ENCODE measurements at regions of chr20 and their contacts with region 1.

Region 1: GRCh38 chr20:41064377-41064776 is 35.8 kb downstream of the TOP1 start:
- DNase-seq: no peak
- ATAC-seq: peak; percentile 62
- H3K4me3 Mint-ChIP-seq: peak overlapping the region; percentile 33
- H3K27ac Mint-ChIP-seq: no peak overlapping the region
- H3K4me1 Mint-ChIP-seq: peaks cover 52% of the 10 kb centered on the region
- H3K27me3 Mint-ChIP-seq: no peaks in the 10 kb centered on the region
- CTCF ChIP-seq: no peak

Region 2: DNA sequence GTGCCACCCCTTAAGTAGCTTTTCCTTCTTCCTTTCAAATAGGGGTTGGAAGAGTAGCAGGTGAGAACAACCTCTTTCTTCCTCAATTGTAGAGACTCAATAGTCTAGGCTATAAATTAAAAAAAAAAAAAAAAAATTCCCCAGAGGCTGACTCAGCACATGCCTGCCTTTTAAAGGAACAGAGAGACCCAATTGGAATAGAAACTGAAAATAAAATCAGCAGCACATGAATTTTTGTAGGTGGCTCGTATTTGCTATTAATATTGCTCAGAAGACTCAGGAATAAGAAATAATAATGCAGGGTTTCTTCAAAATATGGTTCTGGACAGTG is 16.4 kb before region 1 on chr20:
- CTCF ChIA-PET with region 1: no interaction called
- POLR2A ChIA-PET with region 1: no interaction called
- intact Hi-C with region 1: loop called (anchors 2 kb)
- DNase-seq: no peak
- ATAC-seq: peak; percentile 76
- H3K4me3 Mint-ChIP-seq: peak overlapping the region; percentile 73
- H3K27ac Mint-ChIP-seq: peak overlapping the region; percentile 80
- H3K4me1 Mint-ChIP-seq: peaks cover 85% of the 10 kb centered on the region
- H3K27me3 Mint-ChIP-seq: no peaks in the 10 kb centered on the region
- CTCF ChIP-seq: no peak

Measured in activated B cell treated with CpG ODN at 0.5 μM for 24 hours (primary cell).